AG04450 (cell line): ENCODE measurements at regions of chr9 and their contacts with region 1.

Region 1: GRCh38 chr9:97982683-97983588 is at the start of gene ANP32B:
- DNase-seq: peak; percentile 67
- H3K4me3 ChIP-seq: peak within 1 kb of the TSS; percentile 78
- H3K27ac ChIP-seq: peak within 1 kb of the TSS; percentile 84
- H3K27me3 ChIP-seq: no peaks in the 10 kb centered on the region
- CTCF ChIP-seq: peak; percentile 73
- polyA plus RNA-seq, gene ANP32B: 53.3 and 59.0 TPM in 2 replicates

Region 2: DNA sequence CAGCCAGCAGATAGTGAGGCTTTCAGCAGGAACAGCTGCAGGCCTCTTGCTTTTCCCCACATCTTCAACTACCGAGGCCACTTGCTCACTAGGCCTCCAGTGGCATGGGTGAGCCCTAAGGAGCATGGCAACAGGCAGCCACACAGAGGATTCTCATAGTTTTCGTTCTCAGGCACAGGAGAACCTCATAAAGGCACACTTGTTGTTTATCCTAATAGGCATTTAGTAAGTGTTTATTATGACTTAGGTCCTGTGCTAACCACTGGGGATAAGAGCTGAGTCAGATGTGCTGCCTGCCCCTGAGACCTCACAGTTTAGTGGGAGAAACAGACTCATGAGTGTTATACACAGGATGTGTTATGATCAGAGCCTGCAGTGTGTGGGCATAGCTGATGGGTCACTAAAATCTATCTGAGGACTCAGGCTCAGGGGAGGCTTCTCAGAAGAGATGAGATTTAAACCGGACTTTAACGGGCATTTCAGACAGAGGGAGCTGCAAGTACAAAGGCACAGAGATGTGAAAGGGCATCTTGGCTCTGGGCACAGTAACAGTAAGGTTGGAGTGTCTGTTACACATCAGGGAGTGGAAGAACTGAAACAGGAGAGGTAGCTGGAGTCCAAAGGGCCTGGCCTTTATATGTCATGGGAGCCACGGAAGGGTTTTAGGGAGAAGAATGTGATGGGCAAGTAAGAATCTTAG is 24.0 kb before region 1 on chr9:
- CTCF ChIA-PET with region 1: interaction called, 15 read pairs
- POLR2A ChIA-PET with region 1: interaction called, 12 read pairs
- DNase-seq: peak; percentile 63
- H3K4me3 ChIP-seq: no peak overlapping the region
- H3K27ac ChIP-seq: peak overlapping the region; percentile 33
- H3K27me3 ChIP-seq: peaks cover 10% of the 10 kb centered on the region
- CTCF ChIP-seq: no peak

Region 3: DNA sequence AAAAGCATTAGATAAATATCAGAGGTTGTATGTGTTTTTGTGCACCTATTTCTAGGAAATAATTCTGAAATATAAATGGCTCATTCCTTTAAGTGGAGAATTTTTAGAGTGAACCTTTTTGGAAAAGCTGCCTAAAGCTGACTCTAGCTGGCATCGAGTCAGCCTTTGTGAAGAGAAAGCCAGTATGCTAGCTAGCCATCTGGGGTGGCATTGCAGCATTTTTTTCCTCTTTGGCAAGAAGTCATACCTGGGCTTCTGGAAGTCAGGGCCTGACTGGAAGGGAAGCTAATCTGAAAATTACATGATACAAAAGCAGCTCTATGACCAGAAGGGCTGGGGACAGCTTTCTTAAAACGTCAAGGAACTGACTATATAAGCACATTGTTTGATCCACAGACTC is 19.9 kb after region 1 on chr9:
- CTCF ChIA-PET with region 1: interaction called, 14 read pairs
- POLR2A ChIA-PET with region 1: no interaction called
- DNase-seq: no peak
- H3K4me3 ChIP-seq: no peak overlapping the region
- H3K27ac ChIP-seq: no peak overlapping the region
- H3K27me3 ChIP-seq: no peaks in the 10 kb centered on the region
- CTCF ChIP-seq: no peak